ENCODE measurements at regions of chr5 and their contacts with region 1.

Region 1: DNA sequence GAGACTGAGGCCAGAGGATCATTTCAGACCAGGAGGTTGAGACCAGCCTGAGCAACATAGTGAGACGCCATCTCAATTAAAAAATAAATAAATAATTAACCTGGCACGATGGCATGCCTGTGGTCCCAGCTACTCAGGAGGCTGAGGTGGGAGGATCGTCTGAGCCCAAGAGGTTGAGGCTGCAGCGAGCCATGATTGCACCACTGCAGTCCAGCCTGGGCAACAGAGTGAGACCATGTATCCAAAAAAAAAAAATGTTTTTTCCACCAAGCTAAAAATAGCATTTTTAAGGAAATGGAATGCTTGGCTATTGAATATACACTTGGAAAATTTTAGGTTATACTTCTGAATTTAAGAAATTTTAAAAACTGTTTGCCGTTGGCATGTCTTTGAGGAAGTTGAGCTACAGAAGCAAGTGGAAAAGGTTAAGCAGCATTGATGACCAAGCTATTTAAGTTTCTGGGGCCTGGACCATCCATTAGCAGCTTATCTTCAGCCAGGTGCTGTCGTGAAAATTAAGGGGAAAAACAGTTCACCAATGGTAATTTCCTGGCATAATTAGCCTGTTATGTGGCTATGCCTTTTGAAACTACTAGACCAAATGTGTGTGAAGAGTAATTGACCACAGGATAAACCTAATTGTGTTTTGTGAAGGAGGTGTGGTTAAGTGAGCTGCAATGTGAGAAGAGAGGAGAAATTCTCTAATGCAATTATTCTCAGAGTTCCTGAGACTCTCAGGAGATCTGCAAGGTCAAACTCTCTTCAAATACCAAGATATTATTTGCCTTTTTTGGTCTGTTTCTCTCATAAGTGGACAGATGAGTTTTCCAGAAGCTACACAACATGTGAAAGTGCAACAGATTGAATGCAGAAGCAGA is 21.0 kb downstream of the F2R start:
- DNase-seq: no peak
- H3K4me3 Mint-ChIP-seq: no peak overlapping the region
- H3K27ac Mint-ChIP-seq: no peak overlapping the region
- H3K4me1 Mint-ChIP-seq: peaks cover 19% of the 10 kb centered on the region
- H3K27me3 Mint-ChIP-seq: no peaks in the 10 kb centered on the region

Region 2: DNA sequence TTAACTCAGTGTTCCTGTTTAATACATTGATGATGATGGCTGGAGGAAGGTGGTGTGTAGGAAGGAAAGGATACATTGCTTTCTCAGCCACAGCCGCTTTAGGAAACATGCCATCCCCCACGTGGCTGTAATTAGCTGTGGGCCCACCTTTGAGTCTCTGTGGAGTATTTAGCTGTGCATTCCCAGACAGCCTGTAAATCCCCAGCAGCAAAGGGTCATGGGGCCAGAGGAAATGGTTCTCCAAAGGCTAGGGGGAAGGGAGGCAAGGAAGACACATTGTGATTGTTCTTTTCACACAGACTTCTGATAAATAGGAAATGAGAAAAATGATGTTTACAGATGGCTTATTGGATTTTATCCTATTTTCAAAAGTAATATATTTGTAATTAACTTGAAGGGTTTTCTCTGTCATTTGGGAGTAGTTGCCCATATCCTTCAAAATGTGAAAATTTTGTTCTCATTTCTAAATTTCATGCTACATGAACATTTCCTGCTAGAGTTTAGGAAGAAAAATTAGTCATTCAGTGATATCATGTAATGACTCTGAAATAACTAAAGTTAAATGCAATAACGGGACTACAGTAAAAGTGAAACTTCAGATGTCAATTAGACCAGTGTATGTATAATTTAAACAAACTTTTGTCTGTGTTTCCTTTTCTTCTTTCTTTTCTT is 45.3 kb before region 1 on chr5:
- CTCF ChIA-PET with region 1: interaction called, 4 read pairs
- intact Hi-C with region 1: loop called (anchors 1 kb)
- DNase-seq: no peak
- H3K4me3 Mint-ChIP-seq: no peak overlapping the region
- H3K27ac Mint-ChIP-seq: peak overlapping the region; percentile 36
- H3K4me1 Mint-ChIP-seq: peaks cover 15% of the 10 kb centered on the region
- H3K27me3 Mint-ChIP-seq: no peaks in the 10 kb centered on the region

Region 3: GRCh38 chr5:76855961-76856360 is 119.0 kb after region 1 on chr5:
- CTCF ChIA-PET with region 1: no interaction called
- intact Hi-C with region 1: loop called (anchors 5 kb)
- DNase-seq: peak; percentile 68
- H3K4me3 Mint-ChIP-seq: peak overlapping the region; percentile 19
- H3K27ac Mint-ChIP-seq: peak overlapping the region; percentile 79
- H3K4me1 Mint-ChIP-seq: peaks cover 16% of the 10 kb centered on the region
- H3K27me3 Mint-ChIP-seq: no peaks in the 10 kb centered on the region